ENCODE measurements at regions of chr16 and their contacts with region 1.

Region 1: GRCh38 chr16:46789499-46790414 is 41.2 kb downstream of the C16orf87 start:
- DNase-seq: peak in 1 of 2 experiments; percentile 72
- H3K4me3 ChIP-seq: peak overlapping the region; percentile 84
- H3K27ac ChIP-seq: no peak overlapping the region
- H3K4me1 ChIP-seq: peaks cover 4% of the 10 kb centered on the region; the same call in 1 of the 2 replicates
- H3K27me3 ChIP-seq: no peaks in the 10 kb centered on the region
- CTCF ChIP-seq: no peak

Region 2: GRCh38 chr16:46757339-46758050 is 32.3 kb before region 1 on chr16:
- CTCF ChIA-PET with region 1: no interaction called
- POLR2A ChIA-PET with region 1: no interaction called
- intact Hi-C with region 1: no loop called
- DNase-seq: peak in 1 of 2 experiments; percentile 75
- H3K4me3 ChIP-seq: no peak overlapping the region
- H3K27ac ChIP-seq: no peak overlapping the region
- H3K4me1 ChIP-seq: peaks cover 4% of the 10 kb centered on the region; the same call in 1 of the 2 replicates
- H3K27me3 ChIP-seq: peaks cover 19% of the 10 kb centered on the region; the same call in 1 of the 2 replicates
- CTCF ChIP-seq: no peak

Region 3: DNA sequence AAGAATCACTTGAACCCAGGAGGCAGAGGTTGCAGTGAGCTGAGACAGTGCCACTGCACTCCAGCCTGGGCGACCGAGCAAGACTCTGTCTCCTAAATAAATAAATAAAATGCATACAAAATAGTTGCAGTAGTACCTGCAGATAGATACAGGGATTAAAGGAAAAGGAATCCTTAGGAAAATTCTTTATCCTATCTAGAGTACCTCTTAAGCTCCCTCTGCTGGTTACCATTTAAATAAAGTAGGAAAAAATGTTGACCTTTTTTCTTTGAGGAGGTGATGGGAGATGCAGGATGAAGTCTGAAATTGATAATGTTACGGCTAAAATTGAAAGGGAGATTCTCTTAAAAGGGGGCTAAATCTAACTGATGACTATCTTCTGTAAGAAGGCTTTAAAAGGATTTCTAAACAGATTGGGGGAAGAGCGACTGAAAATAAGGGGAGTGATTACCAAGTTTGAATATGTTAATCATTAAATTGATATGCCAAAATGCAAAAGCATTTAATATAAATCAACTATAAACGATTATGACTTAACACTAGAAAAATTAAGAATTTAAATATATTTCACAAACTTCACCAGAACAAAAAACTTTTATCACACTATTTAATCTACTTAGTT is 11.8 kb after region 1 on chr16:
- CTCF ChIA-PET with region 1: interaction called, 3 read pairs
- POLR2A ChIA-PET with region 1: interaction called, 20 read pairs
- intact Hi-C with region 1: no loop called
- DNase-seq: no peak
- H3K4me3 ChIP-seq: no peak overlapping the region
- H3K27ac ChIP-seq: no peak overlapping the region
- H3K4me1 ChIP-seq: no peaks in the 10 kb centered on the region
- H3K27me3 ChIP-seq: no peaks in the 10 kb centered on the region
- CTCF ChIP-seq: peak; percentile 68

Measured in PC-9 (cell line).